Activated CD4-positive, alpha-beta memory T cell treated with anti-CD3 and anti-CD28 coated beads for 36 hours (primary cell): ENCODE measurements at regions of chr2 and their contacts with region 1.

Region 1: DNA sequence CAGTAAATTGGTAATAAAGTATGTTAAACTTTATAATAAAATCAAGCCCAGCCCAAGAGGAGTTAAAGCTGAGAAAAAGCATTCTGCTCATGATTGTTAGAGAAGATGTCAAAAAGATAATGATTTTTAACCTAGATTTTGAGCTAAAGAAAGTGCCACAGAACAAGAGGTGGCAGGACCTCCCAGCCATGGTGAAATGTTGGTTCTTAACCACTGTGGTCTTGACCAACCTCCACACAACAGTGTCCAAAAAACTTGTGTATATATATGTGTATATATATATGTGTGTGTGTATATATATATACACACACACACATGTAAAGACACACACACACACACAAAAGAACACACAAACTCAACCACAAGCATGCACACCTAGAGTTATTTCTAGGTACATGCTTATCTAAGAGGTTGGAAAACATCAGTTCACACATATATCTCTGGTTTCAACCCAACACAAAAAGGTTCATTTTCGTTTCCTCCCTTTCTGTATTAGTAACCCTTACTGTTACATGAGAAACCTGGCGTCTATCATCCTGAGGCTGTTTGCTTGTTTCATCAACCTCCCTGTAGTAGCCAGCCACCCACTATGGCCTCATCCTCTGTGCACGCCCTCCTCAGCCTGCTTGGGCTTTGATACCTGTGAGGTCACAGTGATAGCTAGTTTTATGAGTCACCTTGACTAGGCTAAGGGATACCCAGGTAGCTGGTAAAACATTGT is 631.8 kb upstream of the ID2 start:
- DNase-seq: peak; percentile 88
- H3K4me3 Mint-ChIP-seq: no peak overlapping the region
- H3K27ac Mint-ChIP-seq: peak overlapping the region; percentile 78
- H3K4me1 Mint-ChIP-seq: peaks cover 28% of the 10 kb centered on the region
- H3K27me3 Mint-ChIP-seq: peaks cover 1% of the 10 kb centered on the region

Region 2: GRCh38 chr2:7773362-7774360 is 276.4 kb before region 1 on chr2:
- CTCF ChIA-PET with region 1: no interaction called
- POLR2A ChIA-PET with region 1: no interaction called
- intact Hi-C with region 1: loop called (anchors 5 kb)
- DNase-seq: peak; percentile 65
- H3K4me3 Mint-ChIP-seq: no peak overlapping the region
- H3K27ac Mint-ChIP-seq: peak overlapping the region; percentile 66
- H3K4me1 Mint-ChIP-seq: peaks cover 33% of the 10 kb centered on the region
- H3K27me3 Mint-ChIP-seq: peaks cover 12% of the 10 kb centered on the region

Region 3: DNA sequence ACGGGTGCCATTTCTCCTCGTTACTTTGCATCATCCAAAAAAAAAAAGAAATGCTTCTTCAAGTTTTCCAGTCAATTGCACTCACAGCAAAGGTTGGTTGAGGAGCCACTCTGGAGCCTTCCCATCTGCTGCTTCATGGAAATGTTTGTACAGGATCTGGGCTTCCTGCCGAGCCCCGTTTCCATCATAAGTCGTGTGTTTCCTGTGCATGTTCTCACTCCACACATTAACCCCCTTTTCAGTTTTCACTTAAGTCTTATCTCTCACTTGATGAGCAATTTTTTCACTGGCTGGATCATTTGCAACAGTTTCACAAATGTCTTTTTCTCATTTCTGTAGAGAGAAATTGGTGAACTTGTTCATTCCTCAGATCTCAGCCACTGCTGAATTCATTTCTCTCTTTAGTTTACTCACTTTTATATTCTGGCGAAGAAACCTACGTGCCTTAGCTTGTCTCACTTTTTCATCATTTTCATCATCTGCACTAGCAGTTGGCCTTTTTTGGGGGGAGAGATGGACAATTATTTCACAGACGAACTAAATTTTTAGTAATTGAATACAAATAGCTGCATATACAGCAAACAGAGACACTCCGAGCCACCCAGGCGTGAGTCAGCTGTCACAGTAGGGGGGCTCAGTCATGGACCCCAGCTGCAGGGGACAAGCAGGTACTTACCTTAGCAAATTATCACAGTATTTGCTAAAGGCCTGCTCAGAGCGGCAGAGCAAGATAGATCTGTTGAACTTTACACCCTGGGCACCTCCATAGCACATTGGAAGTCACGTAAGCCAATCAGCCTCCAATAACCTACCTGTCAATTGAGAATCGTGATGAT is 119.0 kb before region 1 on chr2:
- CTCF ChIA-PET with region 1: no interaction called
- POLR2A ChIA-PET with region 1: no interaction called
- intact Hi-C with region 1: loop called (anchors 1 kb)
- DNase-seq: peak; percentile 62
- H3K4me3 Mint-ChIP-seq: peak overlapping the region; percentile 1
- H3K27ac Mint-ChIP-seq: peak overlapping the region; percentile 88
- H3K4me1 Mint-ChIP-seq: peaks cover 31% of the 10 kb centered on the region
- H3K27me3 Mint-ChIP-seq: peaks cover 3% of the 10 kb centered on the region

Region 4: DNA sequence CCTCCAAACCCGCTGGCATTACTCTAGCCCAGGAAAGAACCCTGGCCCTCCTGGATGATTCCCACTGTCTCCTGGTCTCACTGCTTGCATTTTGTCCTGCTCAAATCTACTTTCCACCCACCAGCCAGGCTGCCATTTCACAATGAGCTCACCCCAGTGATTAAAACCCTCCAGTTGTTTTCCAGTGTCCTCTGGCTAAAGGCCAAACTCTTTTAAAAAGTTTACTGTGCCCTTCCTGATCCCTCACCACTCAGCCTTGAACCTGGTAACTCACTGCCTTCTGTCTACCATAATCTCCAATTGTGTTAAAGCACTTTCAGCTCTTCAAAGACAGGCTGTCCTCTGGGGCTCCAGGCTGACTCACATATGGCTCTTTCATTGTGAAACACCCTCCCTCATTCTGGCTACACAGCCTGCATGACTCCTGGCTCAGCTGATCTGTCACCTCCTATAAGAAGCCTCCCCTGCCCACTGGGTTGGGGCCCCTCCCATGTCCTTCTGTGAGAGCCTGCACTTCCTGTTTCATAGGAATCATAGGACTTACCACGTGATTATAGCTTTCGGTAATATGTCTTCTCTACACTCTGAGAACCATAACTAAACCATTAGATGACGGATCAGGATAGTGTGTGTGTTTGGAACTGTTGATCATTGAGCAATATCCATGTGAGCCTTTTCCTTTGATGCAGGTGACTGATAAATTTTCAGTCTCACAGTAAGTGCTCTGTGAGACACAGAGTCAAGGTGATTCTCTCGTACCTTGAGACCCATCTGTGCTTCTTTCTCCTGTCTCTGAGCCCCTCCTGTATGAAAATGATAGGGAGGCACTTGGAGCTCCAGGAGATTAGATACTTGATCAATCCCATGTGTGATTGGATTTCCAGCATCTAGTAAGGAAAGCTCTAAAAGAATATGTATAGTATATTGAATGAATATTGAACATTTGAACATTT is 41.0 kb after region 1 on chr2:
- CTCF ChIA-PET with region 1: no interaction called
- POLR2A ChIA-PET with region 1: no interaction called
- intact Hi-C with region 1: loop called (anchors 2 kb)
- DNase-seq: peak; percentile 90
- H3K4me3 Mint-ChIP-seq: no peak overlapping the region
- H3K27ac Mint-ChIP-seq: no peak overlapping the region
- H3K4me1 Mint-ChIP-seq: no peaks in the 10 kb centered on the region
- H3K27me3 Mint-ChIP-seq: no peaks in the 10 kb centered on the region

Region 5: DNA sequence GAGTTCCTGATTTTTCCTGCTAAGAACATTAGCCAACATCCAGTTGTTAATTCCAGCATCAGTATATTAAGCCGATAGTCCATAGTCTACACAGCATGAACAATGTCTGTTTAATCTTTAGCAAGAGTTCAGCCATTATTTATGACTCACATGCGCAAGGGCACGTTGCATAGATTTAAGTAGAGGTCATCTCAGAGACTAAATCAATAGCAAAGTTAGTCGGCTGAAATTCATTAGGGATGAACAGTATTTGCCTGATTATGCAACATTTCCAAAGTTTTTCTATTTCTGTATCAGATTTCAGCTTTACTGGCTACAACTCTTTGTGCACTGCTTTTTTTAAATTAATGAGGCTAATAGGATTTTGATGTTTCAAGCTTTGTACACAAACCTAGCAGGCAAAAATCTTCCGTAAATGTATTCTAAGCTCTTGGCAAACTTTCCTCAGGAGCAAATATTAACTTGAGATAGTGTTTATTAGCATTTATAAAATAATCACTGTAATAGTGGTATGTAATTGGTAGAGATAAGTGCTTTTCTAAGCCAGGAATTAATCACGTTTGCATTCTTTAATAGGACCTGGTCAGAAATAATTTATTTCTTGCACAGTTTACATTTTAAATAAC is 53.2 kb after region 1 on chr2:
- CTCF ChIA-PET with region 1: no interaction called
- POLR2A ChIA-PET with region 1: no interaction called
- intact Hi-C with region 1: no loop called
- DNase-seq: no peak
- H3K4me3 Mint-ChIP-seq: no peak overlapping the region
- H3K27ac Mint-ChIP-seq: no peak overlapping the region
- H3K4me1 Mint-ChIP-seq: no peaks in the 10 kb centered on the region
- H3K27me3 Mint-ChIP-seq: no peaks in the 10 kb centered on the region

Region 6: GRCh38 chr2:8162552-8162951 is 112.5 kb after region 1 on chr2:
- CTCF ChIA-PET with region 1: no interaction called
- POLR2A ChIA-PET with region 1: no interaction called
- intact Hi-C with region 1: no loop called
- DNase-seq: no peak
- H3K4me3 Mint-ChIP-seq: no peak overlapping the region
- H3K27ac Mint-ChIP-seq: no peak overlapping the region
- H3K4me1 Mint-ChIP-seq: no peaks in the 10 kb centered on the region
- H3K27me3 Mint-ChIP-seq: no peaks in the 10 kb centered on the region

Region 7: DNA sequence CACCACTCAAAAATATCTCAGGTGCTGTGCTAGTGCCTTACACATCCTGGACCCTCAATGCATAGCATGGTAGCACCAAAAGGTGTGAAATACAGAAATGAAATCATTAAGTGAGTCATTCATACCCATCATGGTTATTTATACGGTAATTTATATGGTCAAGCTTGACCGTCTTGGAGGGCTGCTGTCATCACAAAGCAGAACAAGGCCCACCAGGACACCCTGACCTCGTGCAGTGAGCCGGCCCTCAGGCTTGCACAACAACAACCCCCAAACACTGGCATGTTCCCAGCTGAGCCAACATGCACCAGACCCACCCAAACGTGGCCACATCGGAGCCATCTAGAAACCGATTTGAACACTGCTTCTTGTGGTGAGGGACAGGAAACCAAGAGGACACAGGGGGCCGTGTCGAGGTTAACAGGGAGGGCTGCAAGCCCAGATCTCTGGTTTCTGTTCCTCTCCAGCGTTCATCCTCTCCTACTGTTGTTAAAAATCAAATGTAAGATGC is 253.4 kb after region 1 on chr2:
- CTCF ChIA-PET with region 1: no interaction called
- POLR2A ChIA-PET with region 1: no interaction called
- intact Hi-C with region 1: loop called (anchors 2 kb)
- DNase-seq: peak; percentile 81
- H3K4me3 Mint-ChIP-seq: no peak overlapping the region
- H3K27ac Mint-ChIP-seq: peak overlapping the region; percentile 16
- H3K4me1 Mint-ChIP-seq: peaks cover 62% of the 10 kb centered on the region
- H3K27me3 Mint-ChIP-seq: peaks cover 6% of the 10 kb centered on the region